Heart right ventricle (tissue), 16 donors: ENCODE measurements at regions of chr2 and their contacts with region 1.

Region 1: DNA sequence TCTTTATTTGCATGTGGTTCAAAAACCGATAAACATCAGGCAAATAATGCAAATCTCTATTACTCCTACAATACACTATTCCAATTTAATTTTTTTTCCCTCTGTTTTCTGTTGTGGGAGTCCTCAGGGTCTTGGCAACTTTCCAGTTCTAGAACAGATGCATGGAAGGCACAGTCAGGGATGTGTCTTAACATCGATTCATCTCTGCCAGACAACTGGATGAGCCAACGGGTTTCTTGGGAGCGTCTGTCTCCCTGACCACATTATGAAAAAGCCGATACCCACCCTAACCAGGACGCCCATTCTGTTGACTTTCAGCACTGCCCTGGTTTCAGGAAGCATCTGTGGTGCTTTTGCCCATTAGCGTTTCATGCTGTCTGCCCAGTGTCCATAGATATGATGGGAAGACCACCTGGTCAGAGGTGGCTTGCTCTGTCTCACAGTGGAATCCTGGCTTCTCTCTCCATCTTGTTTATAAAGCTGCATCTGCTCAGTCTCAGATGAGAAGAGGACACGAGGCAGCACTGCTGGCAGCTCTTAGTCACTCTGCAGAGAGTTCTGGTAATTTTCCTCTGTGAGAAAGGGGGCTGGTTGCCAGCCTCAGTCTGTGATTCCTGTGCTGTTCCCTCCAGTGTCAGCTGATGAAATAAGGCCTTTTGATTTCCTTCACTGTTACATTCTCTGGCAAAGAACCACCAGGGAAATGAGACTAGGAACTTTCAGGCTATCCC is 57.9 kb upstream of the KCNE4 start:
- DNase-seq: peak; percentile 68 to 85
- ATAC-seq: peak; percentile 97 to 100 (median 99)
- H3K4me3 ChIP-seq: no peak overlapping the region
- H3K27ac ChIP-seq: peak overlapping the region; percentile 17 to 84 (median 62)
- H3K4me1 ChIP-seq: peaks cover 0 to 30% (median 17%) of the 10 kb centered on the region in 9 donors
- H3K27me3 ChIP-seq: no peaks in the 10 kb centered on the region
- CTCF ChIP-seq: no peak

Region 2: GRCh38 chr2:221570321-221570935 is 1423.7 kb before region 1 on chr2:
- intact Hi-C with region 1: no loop called
- DNase-seq: peak; percentile 15 to 27
- ATAC-seq: no peak
- H3K4me3 ChIP-seq: peak overlapping the region; percentile 26 to 92 (median 76)
- H3K27ac ChIP-seq: no peak overlapping the region
- H3K4me1 ChIP-seq: peaks cover 0 to 52% (median 44%) of the 10 kb centered on the region in 9 donors
- H3K27me3 ChIP-seq: peaks cover 0 to 83% (median 10%) of the 10 kb centered on the region in 7 donors
- CTCF ChIP-seq: peak in 4 of 9 donors; percentile 16 to 55 (median 38)

Region 3: GRCh38 chr2:222504719-222505118 is 489.4 kb before region 1 on chr2:
- intact Hi-C with region 1: no loop called
- DNase-seq: no peak
- ATAC-seq: no peak
- H3K4me3 ChIP-seq: no peak overlapping the region
- H3K27ac ChIP-seq: no peak overlapping the region
- H3K4me1 ChIP-seq: no peaks in the 10 kb centered on the region
- H3K27me3 ChIP-seq: peaks cover 0 to 1% (median 0%) of the 10 kb centered on the region in 7 donors
- CTCF ChIP-seq: no peak

Region 4: DNA sequence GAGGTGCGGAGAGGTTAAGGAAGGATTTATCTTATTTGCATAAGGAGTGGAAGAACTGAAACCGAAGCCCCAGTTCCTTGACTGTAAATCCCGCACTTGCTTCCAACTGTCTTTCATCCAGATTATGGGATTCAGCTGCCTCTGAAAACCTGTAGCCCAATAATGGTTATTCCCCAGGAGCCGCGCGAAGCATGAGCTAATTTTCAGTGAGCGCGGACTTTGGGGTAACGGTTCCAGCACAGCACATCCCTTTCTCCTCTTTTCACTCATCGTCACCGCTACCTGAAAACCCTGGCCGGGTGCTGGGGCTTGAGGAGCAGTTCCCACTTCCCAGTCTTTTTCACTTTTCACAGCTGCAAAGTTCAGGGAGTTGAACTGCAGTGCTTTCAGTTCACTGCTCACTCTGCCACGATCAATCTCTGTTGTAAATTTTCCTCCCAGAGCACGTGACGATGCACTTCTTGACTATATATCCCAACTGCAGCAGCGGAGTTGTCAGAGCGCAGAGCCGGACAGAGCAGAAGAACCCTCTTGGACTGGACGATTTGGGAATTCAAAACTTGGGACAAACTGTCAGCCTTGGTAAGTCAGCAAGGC is 57.7 kb after region 1 on chr2 and contains the start of gene KCNE4:
- intact Hi-C with region 1: loop called in 3 of 10 experiments (anchors 2 to 5 kb)
- DNase-seq: peak; percentile 36 to 40
- ATAC-seq: peak in 6 of 8 donors; percentile 17 to 49 (median 26)
- H3K4me3 ChIP-seq: peak within 1 kb of the TSS; percentile 16 to 61 (median 54)
- H3K27ac ChIP-seq: peak within 1 kb of the TSS; percentile 64 to 88 (median 81)
- H3K4me1 ChIP-seq: peaks cover 4 to 50% (median 14%) of the 10 kb centered on the region in 9 donors
- H3K27me3 ChIP-seq: no peaks in the 10 kb centered on the region
- CTCF ChIP-seq: no peak
- total RNA-seq, gene KCNE4: 0.28 to 5.2 (median 1.2) TPM

Region 5: GRCh38 chr2:223366566-223366965 is 372.5 kb after region 1 on chr2:
- intact Hi-C with region 1: no loop called
- DNase-seq: no peak
- ATAC-seq: no peak
- H3K4me3 ChIP-seq: no peak overlapping the region
- H3K27ac ChIP-seq: no peak overlapping the region
- H3K4me1 ChIP-seq: no peaks in the 10 kb centered on the region
- H3K27me3 ChIP-seq: no peaks in the 10 kb centered on the region
- CTCF ChIP-seq: no peak